Panc1 (cell line): ENCODE measurements at regions of chr1 and their contacts with region 1.

Region 1: DNA sequence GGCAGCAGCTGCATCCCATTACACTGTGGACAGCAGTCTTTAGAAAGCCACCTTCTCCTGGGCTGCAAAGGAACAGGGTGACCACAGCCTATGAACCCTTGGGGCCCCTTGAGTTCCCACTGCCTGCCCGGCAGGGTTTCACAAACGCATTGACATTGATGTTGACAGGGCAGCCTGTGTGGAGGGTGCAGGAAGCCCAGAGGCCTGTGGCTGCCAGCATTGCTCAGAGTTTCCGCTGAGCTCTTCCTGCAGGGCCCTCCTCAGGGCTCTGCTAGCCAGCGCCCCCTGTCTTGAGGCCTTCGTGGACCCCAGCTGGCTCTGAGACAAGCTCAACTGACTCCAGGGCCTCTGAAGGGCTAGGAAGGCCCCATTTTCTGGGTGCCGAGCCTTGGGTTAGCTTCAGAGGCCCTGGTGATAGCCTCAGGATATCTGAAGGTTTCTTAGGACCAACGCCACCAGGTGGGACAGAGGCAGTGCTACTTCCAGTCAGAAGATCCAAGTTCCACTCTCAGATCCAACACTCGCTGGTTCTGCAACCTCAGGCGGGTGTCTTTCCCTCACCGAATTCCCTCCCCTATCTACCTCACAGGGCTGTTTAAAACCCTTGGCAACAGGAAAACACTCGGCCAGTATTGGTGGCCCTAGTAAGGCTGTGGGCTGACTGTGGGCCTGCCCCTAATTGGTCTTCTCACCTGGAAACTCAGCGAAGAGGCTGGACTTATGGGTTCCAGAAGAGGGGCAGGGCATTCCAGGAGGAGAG is 27.2 kb upstream of the EPS8L3 start:
- DNase-seq: no peak
- ATAC-seq: no peak
- H3K4me3 ChIP-seq: no peak overlapping the region
- H3K27ac ChIP-seq: peak overlapping the region; percentile 93
- H3K4me1 ChIP-seq: peaks cover 83% of the 10 kb centered on the region
- H3K27me3 ChIP-seq: no peaks in the 10 kb centered on the region
- CTCF ChIP-seq: peak; percentile 54

Region 2: DNA sequence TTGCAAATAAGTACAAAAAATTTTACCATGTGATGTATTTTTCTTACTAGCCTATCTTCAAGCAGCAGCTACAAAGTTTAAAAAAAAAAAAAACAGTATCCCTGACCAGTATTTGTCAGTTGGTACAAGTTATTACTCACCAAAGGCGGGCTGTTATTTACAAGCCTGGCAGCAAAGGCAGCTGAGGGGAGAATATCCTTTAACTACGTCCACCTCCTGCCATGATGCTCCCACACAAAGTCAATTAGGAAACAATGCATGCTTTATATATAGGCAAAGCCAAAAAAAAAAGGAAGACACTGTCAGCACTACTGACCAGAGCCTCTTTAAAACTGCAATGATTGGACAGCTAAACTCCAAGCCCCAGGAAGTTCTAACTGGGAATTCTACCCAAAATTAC is 378.4 kb before region 1 on chr1:
- CTCF ChIA-PET with region 1: no interaction called
- POLR2A ChIA-PET with region 1: no interaction called
- in situ Hi-C with region 1: no loop called
- intact Hi-C with region 1: no loop called
- DNase-seq: no peak
- ATAC-seq: no peak
- H3K4me3 ChIP-seq: no peak overlapping the region
- H3K27ac ChIP-seq: no peak overlapping the region
- H3K4me1 ChIP-seq: no peaks in the 10 kb centered on the region
- H3K27me3 ChIP-seq: no peaks in the 10 kb centered on the region
- CTCF ChIP-seq: no peak

Region 3: GRCh38 chr1:109910123-109910962 is 119.4 kb after region 1 on chr1 and contains the start of gene CSF1:
- CTCF ChIA-PET with region 1: no interaction called
- POLR2A ChIA-PET with region 1: no interaction called
- in situ Hi-C with region 1: no loop called
- intact Hi-C with region 1: loop called (anchors 5 kb)
- DNase-seq: no peak
- ATAC-seq: peak; percentile 72
- H3K4me3 ChIP-seq: peak within 1 kb of the TSS; percentile 70 to 83
- H3K27ac ChIP-seq: peak within 1 kb of the TSS; percentile 97
- H3K4me1 ChIP-seq: peaks cover 33% of the 10 kb centered on the region
- H3K27me3 ChIP-seq: no peaks in the 10 kb centered on the region
- CTCF ChIP-seq: no peak
- total RNA-seq, gene CSF1: 217 TPM

Region 4: GRCh38 chr1:109950493-109950892 is 159.6 kb after region 1 on chr1:
- CTCF ChIA-PET with region 1: no interaction called
- POLR2A ChIA-PET with region 1: interaction called, 12 read pairs
- in situ Hi-C with region 1: no loop called
- intact Hi-C with region 1: no loop called
- DNase-seq: no peak
- ATAC-seq: no peak
- H3K4me3 ChIP-seq: no peak overlapping the region
- H3K27ac ChIP-seq: peak overlapping the region; percentile 95
- H3K4me1 ChIP-seq: peaks cover 14% of the 10 kb centered on the region
- H3K27me3 ChIP-seq: no peaks in the 10 kb centered on the region
- CTCF ChIP-seq: no peak

Region 5: DNA sequence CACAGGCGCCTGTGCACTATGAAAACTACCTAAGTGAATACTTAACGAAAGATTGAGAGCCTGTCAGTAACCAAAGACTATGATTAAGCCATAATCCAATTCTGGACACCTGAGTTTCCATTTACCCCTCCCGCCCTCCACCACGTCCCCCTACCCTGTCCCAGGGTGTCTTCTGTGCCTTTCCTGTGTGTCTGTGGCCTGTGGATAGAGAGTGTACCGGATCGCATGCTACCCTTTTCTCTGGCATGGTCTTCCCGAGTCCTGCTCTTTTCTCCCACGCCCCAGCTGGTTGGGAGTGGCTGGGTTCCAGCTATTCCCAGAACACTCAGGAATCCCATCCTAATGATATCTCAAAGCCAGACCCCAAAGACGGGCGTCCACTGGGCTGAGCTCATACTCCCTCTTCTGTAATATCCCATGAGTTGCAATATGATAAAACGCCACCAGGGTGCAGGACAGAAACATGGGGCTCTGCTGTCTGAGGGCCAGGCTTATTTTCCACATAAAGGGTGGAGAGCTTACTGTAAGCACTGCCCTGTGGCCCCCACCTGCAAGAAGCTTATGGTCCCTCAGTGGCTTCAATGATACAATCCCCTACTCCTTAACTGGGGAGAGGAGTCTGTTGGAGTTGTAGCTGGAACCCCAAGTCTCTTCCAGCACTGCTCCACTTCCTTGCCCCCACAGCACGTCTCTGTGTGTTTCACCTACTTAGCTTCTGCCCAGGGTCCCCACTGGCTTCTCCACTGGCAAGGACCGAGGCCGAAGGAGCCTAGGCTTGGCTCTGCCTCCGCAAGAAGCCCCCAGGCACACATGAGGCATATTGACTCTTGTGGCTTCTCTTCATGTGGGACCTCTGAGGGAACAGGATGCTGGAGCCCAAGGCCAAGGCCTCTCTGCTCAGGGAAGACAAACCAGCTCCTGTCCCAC is 297.2 kb after region 1 on chr1:
- CTCF ChIA-PET with region 1: no interaction called
- POLR2A ChIA-PET with region 1: no interaction called
- in situ Hi-C with region 1: no loop called
- intact Hi-C with region 1: no loop called
- DNase-seq: peak; percentile 20
- ATAC-seq: peak; percentile 87
- H3K4me3 ChIP-seq: no peak overlapping the region
- H3K27ac ChIP-seq: no peak overlapping the region
- H3K4me1 ChIP-seq: no peaks in the 10 kb centered on the region
- H3K27me3 ChIP-seq: peaks cover 8% of the 10 kb centered on the region
- CTCF ChIP-seq: peak; percentile 80